ENCODE measurements at regions of chr13 and their contacts with region 1.

Region 1: DNA sequence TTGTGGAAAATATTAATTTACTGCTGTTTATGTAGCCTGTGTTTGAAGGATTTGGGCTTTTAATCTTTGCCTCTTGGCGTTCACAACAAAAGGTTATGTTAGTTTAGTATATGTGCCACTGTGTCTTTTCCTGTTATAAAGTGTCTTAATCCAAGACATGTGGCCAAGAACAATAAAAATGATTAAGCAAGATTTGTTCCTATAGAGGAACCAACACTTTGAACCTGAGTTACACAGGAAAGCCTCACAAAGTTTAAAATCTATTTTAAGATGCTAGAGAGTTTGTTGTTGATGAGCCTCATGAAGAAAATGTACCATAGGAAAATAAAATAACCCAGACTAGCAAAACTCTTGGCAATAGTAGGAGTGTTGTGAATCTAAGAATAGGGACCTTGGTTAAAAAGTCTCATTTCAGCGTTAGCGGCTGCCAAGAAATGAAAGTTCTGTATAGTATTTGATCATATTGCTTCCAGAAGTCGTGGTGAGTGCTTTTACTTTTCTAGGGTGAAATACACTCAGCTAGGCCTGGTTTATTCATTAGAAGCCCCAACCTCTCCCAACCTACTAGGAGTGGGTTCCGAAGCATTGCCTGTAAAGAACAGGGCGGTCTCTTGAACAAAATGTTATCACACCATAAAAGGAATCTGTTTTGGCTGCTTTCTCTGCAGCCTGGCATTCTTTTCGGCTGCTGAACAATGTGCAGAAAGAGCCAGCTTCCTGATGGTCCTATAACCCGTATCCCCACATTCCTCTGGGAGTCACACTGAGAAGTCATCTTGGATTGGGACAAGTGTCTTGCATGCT is 102.6 kb downstream of the LRCH1 start:
- DNase-seq: no peak
- ATAC-seq: peak; percentile 17
- H3K4me3 ChIP-seq: peak overlapping the region; percentile 9; the same call in 1 of the 2 replicates
- H3K27ac ChIP-seq: peak overlapping the region; percentile 67
- H3K4me1 ChIP-seq: peaks cover 29% of the 10 kb centered on the region
- H3K27me3 ChIP-seq: no peaks in the 10 kb centered on the region
- CTCF ChIP-seq: no peak
- EP300 ChIP-seq: no peak
- POLR2A ChIP-seq: no peak
- RAD21 ChIP-seq: no peak

Region 2: DNA sequence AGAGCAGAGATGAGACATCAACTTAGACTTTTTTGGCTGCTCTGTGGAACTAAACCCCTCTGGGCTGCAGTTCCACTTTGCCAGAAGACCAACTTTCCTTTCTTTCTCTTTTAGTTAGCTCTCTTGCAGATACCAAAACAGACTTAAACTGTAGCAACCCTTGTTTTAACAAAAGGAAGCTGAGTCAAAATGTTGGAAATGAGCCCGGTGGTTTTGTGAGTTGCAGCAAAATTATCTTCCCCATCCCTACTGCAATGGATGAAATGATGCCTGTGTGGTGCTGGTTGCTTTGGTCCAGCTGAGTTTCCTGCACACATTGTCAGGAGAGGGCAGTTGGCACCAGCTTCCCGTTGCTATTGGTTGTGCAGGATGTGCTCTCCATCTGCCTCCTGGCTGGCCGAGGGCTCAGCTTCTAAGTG is 12.7 kb after region 1 on chr13:
- CTCF ChIA-PET with region 1: interaction called, 5 read pairs
- POLR2A ChIA-PET with region 1: interaction called, 9 read pairs
- RAD21 ChIA-PET with region 1: interaction called, 11 read pairs
- SMC1A ChIA-PET with region 1: interaction called, 100 read pairs
- in situ Hi-C with region 1: no loop called
- intact Hi-C with region 1: no loop called
- DNase-seq: no peak
- ATAC-seq: peak; percentile 11
- H3K4me3 ChIP-seq: peak overlapping the region; percentile 66
- H3K27ac ChIP-seq: peak overlapping the region; percentile 91
- H3K4me1 ChIP-seq: peaks cover 30% of the 10 kb centered on the region
- H3K27me3 ChIP-seq: no peaks in the 10 kb centered on the region
- CTCF ChIP-seq: no peak
- EP300 ChIP-seq: 0 out of 4 replicates have a peak, but pooled peaks of 1 of the 2 experiments have one; percentile 17
- POLR2A ChIP-seq: no peak
- RAD21 ChIP-seq: no peak

Region 3: GRCh38 chr13:46885018-46885417 is 229.4 kb after region 1 on chr13:
- CTCF ChIA-PET with region 1: no interaction called
- POLR2A ChIA-PET with region 1: no interaction called
- RAD21 ChIA-PET with region 1: no interaction called
- SMC1A ChIA-PET with region 1: no interaction called
- in situ Hi-C with region 1: no loop called
- intact Hi-C with region 1: no loop called
- DNase-seq: no peak
- ATAC-seq: no peak
- H3K4me3 ChIP-seq: no peak overlapping the region
- H3K27ac ChIP-seq: no peak overlapping the region
- H3K4me1 ChIP-seq: no peaks in the 10 kb centered on the region
- H3K27me3 ChIP-seq: no peaks in the 10 kb centered on the region
- CTCF ChIP-seq: no peak
- EP300 ChIP-seq: no peak
- POLR2A ChIP-seq: no peak
- RAD21 ChIP-seq: no peak

Measured in GM12878 (cell line).